Activated CD8-positive, alpha-beta T cell treated with anti-CD3 and anti-CD28 coated beads for 36 hours (primary cell): ENCODE measurements at regions of chr1 and their contacts with region 1.

Region 1: GRCh38 chr1:101122452-101123166 is 97.0 kb upstream of the DPH5 start:
- DNase-seq: peak; percentile 65
- ATAC-seq: peak; percentile 77
- H3K4me3 Mint-ChIP-seq: peak overlapping the region; percentile 42
- H3K27ac Mint-ChIP-seq: peak overlapping the region; percentile 84
- H3K4me1 Mint-ChIP-seq: peaks cover 51% of the 10 kb centered on the region
- H3K27me3 Mint-ChIP-seq: no peaks in the 10 kb centered on the region
- CTCF ChIP-seq: no peak

Region 2: DNA sequence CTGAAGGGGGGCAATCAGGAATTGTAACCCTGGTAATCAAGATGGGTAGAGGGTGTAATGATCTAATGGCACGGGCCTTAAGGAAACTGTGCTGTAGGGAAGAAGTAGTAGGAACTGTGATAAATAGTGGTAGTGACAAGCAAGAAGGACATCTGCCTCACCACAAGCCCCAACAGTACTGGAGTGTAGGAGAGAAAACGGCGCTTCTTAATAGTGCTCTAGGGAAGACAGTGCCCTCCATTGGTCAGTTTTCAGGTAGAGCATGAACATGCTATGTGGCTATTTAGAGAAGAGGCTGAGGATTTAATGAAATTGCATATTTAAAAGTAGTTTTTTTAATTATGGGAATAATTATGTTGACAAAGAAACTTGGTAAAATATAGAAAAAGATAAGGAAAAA is 194.5 kb before region 1 on chr1:
- CTCF ChIA-PET with region 1: no interaction called
- POLR2A ChIA-PET with region 1: interaction called, 4 read pairs
- intact Hi-C with region 1: loop called (anchors 5 kb)
- DNase-seq: peak; percentile 28
- ATAC-seq: peak; percentile 13
- H3K4me3 Mint-ChIP-seq: no peak overlapping the region
- H3K27ac Mint-ChIP-seq: no peak overlapping the region
- H3K4me1 Mint-ChIP-seq: peaks cover 52% of the 10 kb centered on the region
- H3K27me3 Mint-ChIP-seq: no peaks in the 10 kb centered on the region
- CTCF ChIP-seq: peak; percentile 37

Region 3: GRCh38 chr1:101081496-101082488 is 40.8 kb before region 1 on chr1:
- CTCF ChIA-PET with region 1: no interaction called
- POLR2A ChIA-PET with region 1: no interaction called
- intact Hi-C with region 1: loop called (anchors 5 kb)
- DNase-seq: peak; percentile 76
- ATAC-seq: peak; percentile 99
- H3K4me3 Mint-ChIP-seq: peak overlapping the region; percentile 26
- H3K27ac Mint-ChIP-seq: peak overlapping the region; percentile 88
- H3K4me1 Mint-ChIP-seq: peaks cover 43% of the 10 kb centered on the region
- H3K27me3 Mint-ChIP-seq: no peaks in the 10 kb centered on the region
- CTCF ChIP-seq: no peak